ENCODE measurements at regions of chr14 and their contacts with region 1.

Region 1: DNA sequence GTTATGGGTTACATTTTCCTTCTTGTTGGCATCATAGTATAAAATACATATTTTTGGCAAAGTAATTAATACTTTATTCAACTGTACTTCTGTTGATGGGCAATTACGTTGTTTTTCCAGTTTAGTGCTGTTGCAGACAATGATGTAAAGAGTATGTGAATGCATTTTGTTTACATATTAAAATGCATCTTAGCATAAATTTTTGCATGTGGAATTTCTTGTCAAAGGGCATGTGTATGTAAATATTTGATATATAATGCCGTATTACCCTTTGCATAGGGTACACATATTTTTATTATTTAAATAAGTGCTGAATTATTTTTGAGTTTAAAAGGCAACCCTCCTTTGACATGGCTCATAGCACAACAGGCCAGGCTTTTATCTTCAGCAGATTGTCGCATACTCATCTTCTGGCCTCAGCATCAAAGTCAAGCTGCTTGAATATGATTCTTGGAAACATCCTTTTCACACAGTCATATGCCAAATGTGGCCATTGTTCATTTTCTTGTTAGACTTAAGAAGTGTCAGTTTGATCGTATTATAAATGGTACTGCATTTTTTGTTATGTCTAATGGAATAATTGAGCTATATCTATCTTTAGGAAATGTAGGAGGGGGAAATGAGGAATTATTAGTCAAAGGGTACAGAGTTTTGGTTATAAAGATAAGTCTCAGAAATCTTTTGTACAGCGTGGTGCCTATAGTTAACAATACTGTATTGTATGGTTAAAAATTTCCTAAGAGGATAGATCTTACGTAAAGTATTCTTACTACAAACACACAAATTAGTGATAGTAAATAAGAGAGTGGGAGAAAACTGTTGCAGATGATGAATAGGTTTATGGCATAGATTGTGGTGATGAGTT is 138.5 kb downstream of the FUT8 start:
- DNase-seq: no peak
- H3K4me3 ChIP-seq: no peak overlapping the region
- H3K27ac ChIP-seq: no peak overlapping the region
- H3K4me1 ChIP-seq: peaks cover 0 to 15% (median 7%) of the 10 kb centered on the region in 4 donors
- H3K27me3 ChIP-seq: no peaks in the 10 kb centered on the region
- CTCF ChIP-seq: no peak
- EP300 ChIP-seq: no peak
- POLR2A ChIP-seq: no peak

Region 2: DNA sequence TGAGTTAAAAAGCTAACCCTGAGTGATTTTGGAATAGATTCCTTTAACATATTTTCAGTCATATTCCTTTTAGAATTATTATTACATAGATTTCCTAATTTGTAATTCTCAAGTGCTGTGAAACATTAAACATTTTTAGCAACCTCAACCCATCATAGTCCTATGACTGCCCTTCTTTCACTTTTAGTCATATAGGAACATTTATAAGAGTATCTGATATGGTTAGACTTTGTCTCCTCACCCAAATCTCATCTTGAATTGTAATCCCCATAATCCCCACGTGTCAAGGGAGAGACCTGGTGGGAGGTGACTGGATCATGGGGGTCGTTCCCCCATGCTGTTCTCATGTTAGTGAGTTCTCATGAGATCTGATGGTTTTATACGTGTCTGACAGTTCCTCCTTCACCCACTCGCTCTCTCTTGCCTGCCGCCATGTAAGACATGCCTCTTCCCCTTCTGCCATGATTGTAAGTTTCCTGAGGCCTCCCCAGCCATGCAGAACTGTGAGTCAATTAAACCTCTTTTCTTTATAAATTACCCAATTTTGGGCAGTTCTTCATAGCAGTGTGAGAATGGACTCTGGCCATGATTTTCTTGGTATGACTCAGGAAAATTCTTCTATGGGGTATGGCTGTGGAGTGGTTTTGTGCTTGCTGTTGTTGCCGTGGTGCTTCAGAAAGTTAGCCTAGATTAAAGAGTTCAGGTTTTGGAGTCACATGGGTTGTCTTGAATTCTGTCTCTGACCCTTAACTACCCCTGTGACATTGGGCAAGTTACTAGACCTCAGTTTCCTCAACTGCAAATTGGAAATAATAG is 54.6 kb before region 1 on chr14:
- intact Hi-C with region 1: loop called (anchors 10 kb)
- DNase-seq: no peak
- H3K4me3 ChIP-seq: no peak overlapping the region
- H3K27ac ChIP-seq: no peak overlapping the region
- H3K4me1 ChIP-seq: peaks cover 0 to 13% (median 5%) of the 10 kb centered on the region in 4 donors
- H3K27me3 ChIP-seq: no peaks in the 10 kb centered on the region
- CTCF ChIP-seq: no peak
- EP300 ChIP-seq: no peak
- POLR2A ChIP-seq: no peak

Measured in sigmoid colon (tissue), 7 donors.